ENCODE measurements at regions of chr17 and their contacts with region 1.

Region 1: GRCh38 chr17:82351716-82352488 is 7.1 kb upstream of the TEX19 start:
- H3K4me3 ChIP-seq: no peak overlapping the region
- H3K27ac ChIP-seq: no peak overlapping the region
- H3K4me1 ChIP-seq: no peaks in the 10 kb centered on the region
- CTCF ChIP-seq: peak; percentile 82

Region 2: DNA sequence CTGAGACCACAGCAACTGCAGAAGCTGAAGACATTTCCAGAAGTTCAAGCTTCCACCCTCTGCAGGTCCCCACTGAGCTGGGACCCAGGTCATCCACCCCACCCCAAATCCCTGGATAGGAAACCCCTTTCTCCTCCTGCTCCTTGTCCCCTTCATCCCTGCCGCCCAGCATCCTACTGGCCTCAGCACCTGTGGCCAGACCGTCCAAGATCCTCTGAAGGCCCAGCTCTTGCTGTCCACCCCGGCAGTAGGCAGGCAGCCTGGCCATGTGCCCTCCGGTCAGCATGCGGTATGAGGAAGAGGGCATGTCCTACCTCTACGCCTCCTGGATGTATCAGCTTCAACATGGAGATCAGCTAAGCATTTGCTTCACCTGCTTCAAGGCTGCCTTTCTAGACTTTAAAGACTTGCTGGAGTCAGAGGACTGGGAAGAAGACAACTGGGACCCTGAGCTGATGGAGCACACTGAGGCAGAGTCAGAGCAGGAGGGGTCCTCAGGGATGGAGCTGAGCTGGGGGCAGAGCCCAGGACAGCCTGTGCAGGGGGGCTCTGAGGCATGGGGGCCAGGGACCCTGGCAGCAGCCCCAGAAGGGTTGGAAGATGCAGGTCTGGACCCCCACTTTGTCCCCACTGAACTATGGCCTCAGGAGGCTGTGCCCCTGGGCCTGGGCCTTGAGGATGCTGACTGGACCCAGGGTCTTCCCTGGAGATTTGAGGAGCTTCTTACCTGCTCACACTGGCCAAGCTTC is 10.2 kb after region 1 on chr17:
- CTCF ChIA-PET with region 1: interaction called, 15 read pairs
- POLR2A ChIA-PET with region 1: no interaction called
- H3K4me3 ChIP-seq: no peak overlapping the region
- H3K27ac ChIP-seq: no peak overlapping the region
- H3K4me1 ChIP-seq: peaks cover under 1% of the 10 kb centered on the region; the same call in 1 of the 2 replicates
- CTCF ChIP-seq: no peak

Region 3: GRCh38 chr17:82414548-82415281 is 62.8 kb after region 1 on chr17:
- CTCF ChIA-PET with region 1: interaction called, 11 read pairs
- POLR2A ChIA-PET with region 1: no interaction called
- H3K4me3 ChIP-seq: no peak overlapping the region
- H3K27ac ChIP-seq: no peak overlapping the region
- H3K4me1 ChIP-seq: peaks cover 12% of the 10 kb centered on the region
- CTCF ChIP-seq: peak; percentile 73

Region 4: GRCh38 chr17:82424001-82424862 is 72.3 kb after region 1 on chr17:
- CTCF ChIA-PET with region 1: interaction called, 10 read pairs
- POLR2A ChIA-PET with region 1: no interaction called
- H3K4me3 ChIP-seq: no peak overlapping the region
- H3K27ac ChIP-seq: no peak overlapping the region
- H3K4me1 ChIP-seq: peaks cover under 1% of the 10 kb centered on the region; the same call in 1 of the 2 replicates
- CTCF ChIP-seq: peak; percentile 35; the same call in 1 of the 2 replicates

Measured in HEK293 (cell line).